Activated CD4-positive, alpha-beta memory T cell treated with anti-CD3 and anti-CD28 coated beads, Interleukin-2, amount 10 ng/mL, durations not matched to agents 7 days and 5 days (primary cell): ENCODE measurements at regions of chr17 and their contacts with region 1.

Region 1: DNA sequence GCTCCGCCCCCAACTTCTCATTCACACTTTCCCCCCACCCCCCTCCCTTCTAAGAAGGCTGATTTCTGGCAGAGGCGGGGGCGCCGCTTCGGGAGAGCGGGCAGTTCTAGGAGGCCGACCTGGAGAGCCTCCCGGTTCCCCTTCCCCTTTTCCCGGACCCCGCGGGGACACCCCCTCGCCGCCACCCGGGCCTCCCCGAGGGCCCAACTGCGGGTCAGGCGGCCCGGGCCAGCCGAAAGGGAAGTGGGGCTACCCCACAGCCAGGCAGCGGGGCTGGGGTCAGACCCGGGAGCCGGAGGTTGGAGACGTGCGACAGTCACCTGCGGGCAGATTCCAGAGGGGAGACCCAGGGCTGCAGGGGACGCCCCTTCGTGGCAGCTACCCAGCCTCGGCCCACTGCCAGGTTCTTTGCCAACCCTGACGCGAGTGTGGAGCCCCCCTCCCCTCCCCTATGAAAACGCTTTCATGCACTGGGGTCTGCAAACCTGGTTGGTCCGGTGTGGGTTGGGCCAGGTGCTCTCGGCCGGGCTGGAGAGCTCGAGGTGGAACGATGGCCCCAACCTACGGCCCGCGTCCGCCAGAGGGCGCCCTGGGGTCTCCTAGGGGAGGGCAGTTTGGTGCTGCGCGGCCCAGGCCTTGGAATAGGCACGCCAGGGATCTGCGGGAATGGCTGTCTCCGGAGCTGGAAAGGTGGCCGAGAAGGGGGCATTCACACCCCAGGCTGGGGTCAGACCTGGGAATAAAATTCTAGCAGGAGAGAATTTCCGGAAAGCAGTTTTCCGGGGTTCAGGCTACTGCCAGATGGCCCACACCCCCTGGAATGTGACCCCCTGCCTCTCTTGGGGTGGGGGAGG is 721 bp upstream of the SOCS3 start:
- DNase-seq: peak; percentile 92
- H3K4me3 Mint-ChIP-seq: peak overlapping the region; percentile 83
- H3K27ac Mint-ChIP-seq: peak overlapping the region; percentile 93
- H3K4me1 Mint-ChIP-seq: peaks cover 46% of the 10 kb centered on the region
- H3K27me3 Mint-ChIP-seq: peaks cover 4% of the 10 kb centered on the region

Region 2: DNA sequence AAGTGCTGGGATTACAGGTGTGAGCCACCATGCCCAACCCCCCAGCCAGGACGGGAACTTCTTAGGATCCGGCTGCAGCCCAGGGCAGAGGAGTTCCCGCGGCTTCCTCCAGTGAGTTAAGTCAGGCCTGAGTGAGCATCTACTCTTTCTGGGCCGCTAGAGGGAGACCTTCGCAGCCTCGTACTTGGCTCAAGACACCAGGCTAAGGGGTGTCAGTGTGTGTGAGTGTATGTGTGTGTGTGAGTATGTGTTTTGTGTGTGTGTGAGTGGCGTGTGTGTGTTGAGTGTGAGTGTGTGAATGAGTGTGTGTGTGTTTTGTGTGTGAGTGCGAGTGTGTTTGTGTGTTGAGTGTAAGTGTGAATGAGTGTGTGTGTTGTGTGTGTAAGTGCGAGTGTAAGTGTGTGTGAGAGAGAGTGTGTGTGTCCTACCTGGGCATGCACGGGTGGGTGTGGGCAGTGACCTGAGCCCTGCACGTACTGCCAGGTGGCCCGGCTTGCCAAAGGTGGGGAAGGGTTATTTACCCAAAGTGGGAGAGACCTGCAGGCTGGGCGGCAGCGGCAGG is 70.7 kb before region 1 on chr17:
- CTCF ChIA-PET with region 1: interaction called, 15 read pairs
- POLR2A ChIA-PET with region 1: interaction called, 4 read pairs
- DNase-seq: peak; percentile 80
- H3K4me3 Mint-ChIP-seq: no peak overlapping the region
- H3K27ac Mint-ChIP-seq: no peak overlapping the region
- H3K4me1 Mint-ChIP-seq: peaks cover 2% of the 10 kb centered on the region
- H3K27me3 Mint-ChIP-seq: no peaks in the 10 kb centered on the region

Region 3: GRCh38 chr17:78329263-78330059 is 31.1 kb before region 1 on chr17:
- CTCF ChIA-PET with region 1: interaction called, 3 read pairs
- POLR2A ChIA-PET with region 1: interaction called, 13 read pairs
- DNase-seq: peak; percentile 64
- H3K4me3 Mint-ChIP-seq: no peak overlapping the region
- H3K27ac Mint-ChIP-seq: peak overlapping the region; percentile 26
- H3K4me1 Mint-ChIP-seq: peaks cover 49% of the 10 kb centered on the region
- H3K27me3 Mint-ChIP-seq: no peaks in the 10 kb centered on the region

Region 4: DNA sequence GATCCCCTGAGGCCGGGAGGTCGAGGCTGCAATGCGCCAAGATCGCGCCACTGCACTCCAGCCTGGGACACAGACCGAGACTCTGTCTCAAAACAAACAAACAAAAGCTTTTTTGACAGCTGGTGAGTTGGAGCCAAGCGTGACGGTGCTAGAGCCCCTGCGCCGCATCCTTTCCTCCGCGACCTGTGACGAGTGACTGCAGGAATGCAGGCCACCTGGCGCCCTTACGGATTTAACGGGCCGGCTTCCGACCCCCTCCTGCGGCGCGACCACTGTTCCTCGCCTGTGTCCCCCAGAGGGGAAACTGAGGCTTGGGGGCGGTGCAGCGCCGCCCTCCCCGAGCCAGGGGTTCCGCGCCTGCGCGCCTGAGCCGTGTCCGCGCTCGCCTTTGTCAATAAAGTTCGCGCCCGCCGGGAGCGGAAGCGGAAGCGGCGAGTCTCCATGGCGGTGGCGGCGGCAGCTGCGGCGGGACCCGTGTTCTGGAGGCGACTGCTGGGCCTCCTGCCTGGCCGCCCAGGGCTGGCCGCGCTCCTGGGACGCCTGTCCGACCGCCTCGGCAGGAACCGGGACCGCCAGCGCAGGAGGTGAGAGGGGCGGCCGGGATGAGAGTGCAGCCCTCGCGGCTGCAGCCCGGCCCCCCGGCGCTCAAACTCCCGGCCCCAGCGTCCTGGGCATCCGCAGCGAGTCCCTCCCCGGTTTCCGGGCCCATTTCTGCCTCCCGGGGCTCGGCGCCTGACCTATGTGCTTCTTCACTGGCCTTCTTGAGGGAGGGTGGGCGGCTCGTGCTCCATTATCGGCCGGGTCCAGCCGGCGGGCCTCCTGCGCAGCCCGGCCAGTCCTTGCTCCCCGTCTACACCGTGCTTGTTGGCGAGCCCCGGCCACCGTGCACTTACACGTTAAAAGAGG is 17.9 kb after region 1 on chr17 and contains the start of gene PGS1:
- CTCF ChIA-PET with region 1: interaction called, 74 read pairs
- POLR2A ChIA-PET with region 1: interaction called, 4 read pairs
- DNase-seq: peak; percentile 88
- H3K4me3 Mint-ChIP-seq: peak within 1 kb of the TSS; percentile 98
- H3K27ac Mint-ChIP-seq: peak within 1 kb of the TSS; percentile 91
- H3K4me1 Mint-ChIP-seq: peaks cover 45% of the 10 kb centered on the region
- H3K27me3 Mint-ChIP-seq: no peaks in the 10 kb centered on the region
- total RNA-seq, gene PGS1: 70.7 to 75.5 TPM

Region 5: GRCh38 chr17:78421484-78422266 is 61.1 kb after region 1 on chr17:
- CTCF ChIA-PET with region 1: interaction called, 67 read pairs
- POLR2A ChIA-PET with region 1: interaction called, 31 read pairs
- DNase-seq: peak; percentile 81
- H3K4me3 Mint-ChIP-seq: no peak overlapping the region
- H3K27ac Mint-ChIP-seq: peak overlapping the region; percentile 58
- H3K4me1 Mint-ChIP-seq: peaks cover 54% of the 10 kb centered on the region
- H3K27me3 Mint-ChIP-seq: no peaks in the 10 kb centered on the region